Caco-2 (cell line): ENCODE measurements at regions of chr7 and their contacts with region 1.

Region 1: DNA sequence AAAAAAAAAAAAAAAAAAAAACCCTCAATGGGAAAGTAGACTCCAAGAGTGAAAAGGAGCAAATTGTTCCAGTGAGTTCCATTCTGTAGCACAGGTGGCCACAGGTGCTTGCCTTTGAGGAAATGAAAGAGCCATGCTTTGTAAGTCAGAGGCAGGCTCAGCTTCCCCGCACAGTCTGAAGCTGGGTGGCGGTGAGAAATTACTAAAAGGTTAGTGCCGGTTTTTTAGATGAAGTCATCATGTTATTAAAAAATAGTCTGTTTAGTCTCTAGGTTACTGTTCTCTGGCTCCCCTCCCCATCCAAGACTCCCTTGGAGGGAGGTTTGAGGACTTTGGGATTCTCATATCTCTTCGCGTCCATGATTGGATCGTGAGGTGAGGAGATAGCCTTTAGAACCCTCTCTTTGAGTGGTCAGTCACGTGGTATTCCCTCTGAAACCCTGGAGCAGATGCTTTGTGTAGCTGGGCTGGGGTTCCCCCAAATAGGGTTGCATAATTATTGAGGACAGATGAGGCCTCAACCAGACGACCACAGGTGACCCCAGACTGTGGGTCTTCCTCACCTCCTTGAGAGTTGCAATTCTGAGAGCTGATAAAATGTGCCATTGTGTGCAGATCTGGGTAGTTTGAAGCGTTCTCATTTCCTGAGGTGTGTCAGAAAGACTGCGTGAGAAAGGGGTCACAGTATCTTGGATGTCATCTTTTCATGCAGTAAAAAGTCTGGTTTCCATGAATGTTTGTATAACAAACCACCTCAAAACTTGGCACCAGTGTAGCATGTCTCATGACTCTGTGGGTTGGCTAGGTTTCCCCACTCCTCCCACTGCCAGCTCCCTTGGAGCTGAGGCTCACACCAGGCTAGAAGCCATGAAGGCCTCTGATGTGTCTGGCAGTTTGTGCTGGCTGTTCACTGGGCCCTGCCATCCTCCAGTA is 27.1 kb downstream of the OGDH start:
- DNase-seq: no peak
- H3K4me3 ChIP-seq: no peak overlapping the region
- H3K4me3 Mint-ChIP-seq: no peak overlapping the region
- H3K27ac Mint-ChIP-seq: peak overlapping the region; percentile 91
- H3K4me1 ChIP-seq: peaks cover 52% of the 10 kb centered on the region
- H3K4me1 Mint-ChIP-seq: peaks cover 59% of the 10 kb centered on the region
- H3K27me3 ChIP-seq: no peaks in the 10 kb centered on the region
- H3K27me3 Mint-ChIP-seq: no peaks in the 10 kb centered on the region
- CTCF ChIP-seq: no peak

Region 2: DNA sequence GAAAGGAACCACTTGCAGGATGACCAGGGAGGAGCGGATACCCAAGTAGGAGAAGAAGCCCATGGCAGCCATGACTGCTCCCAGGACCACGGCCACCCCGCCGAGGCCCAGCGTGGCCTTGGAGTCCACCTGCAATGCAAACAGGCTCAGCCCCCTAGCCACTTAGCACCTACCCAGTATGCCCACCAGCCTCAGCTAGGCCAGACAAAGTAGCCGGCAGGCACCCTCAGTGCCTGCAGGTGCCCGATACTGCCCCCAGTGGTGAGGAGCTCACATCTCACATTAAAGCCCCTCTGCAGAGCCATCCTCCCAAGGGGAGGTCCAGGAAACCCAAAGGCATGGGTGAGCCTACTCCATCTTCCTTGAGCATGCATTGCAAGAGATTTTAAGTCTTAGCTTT is 99.0 kb before region 1 on chr7:
- CTCF ChIA-PET with region 1: no interaction called
- POLR2A ChIA-PET with region 1: no interaction called
- intact Hi-C with region 1: no loop called
- DNase-seq: peak; percentile 61 to 67
- H3K4me3 ChIP-seq: no peak overlapping the region
- H3K4me3 Mint-ChIP-seq: no peak overlapping the region
- H3K27ac Mint-ChIP-seq: no peak overlapping the region
- H3K4me1 ChIP-seq: no peaks in the 10 kb centered on the region
- H3K4me1 Mint-ChIP-seq: peaks cover 6% of the 10 kb centered on the region
- H3K27me3 ChIP-seq: no peaks in the 10 kb centered on the region
- H3K27me3 Mint-ChIP-seq: no peaks in the 10 kb centered on the region
- CTCF ChIP-seq: peak; percentile 50 to 63

Region 3: DNA sequence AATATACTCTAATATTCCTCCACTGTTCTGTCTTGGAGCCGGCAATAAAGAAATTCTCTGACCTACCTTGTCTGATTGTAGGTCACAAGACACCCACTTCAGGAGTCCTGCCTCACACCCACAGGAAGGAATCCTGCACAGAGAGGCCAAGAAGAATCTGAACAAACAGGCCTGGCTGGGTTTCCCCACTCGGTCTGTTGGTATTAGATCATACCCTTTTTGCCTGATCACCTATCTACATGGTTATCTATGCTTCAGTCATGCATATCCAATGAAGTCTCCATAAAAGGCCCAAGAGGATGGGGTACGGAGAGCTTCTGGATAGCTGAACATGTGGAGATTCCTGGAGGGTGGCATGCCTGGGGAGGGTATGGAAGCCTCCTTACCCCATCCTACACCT is 14.8 kb before region 1 on chr7:
- CTCF ChIA-PET with region 1: interaction called, 5 read pairs
- POLR2A ChIA-PET with region 1: interaction called, 6 read pairs
- intact Hi-C with region 1: loop called (anchors 1 kb)
- DNase-seq: peak; percentile 88 to 89
- H3K4me3 ChIP-seq: no peak overlapping the region
- H3K4me3 Mint-ChIP-seq: peak overlapping the region; percentile 67
- H3K27ac Mint-ChIP-seq: peak overlapping the region; percentile 92
- H3K4me1 ChIP-seq: peaks cover 68% of the 10 kb centered on the region
- H3K4me1 Mint-ChIP-seq: peaks cover 53% of the 10 kb centered on the region
- H3K27me3 ChIP-seq: no peaks in the 10 kb centered on the region
- H3K27me3 Mint-ChIP-seq: no peaks in the 10 kb centered on the region
- CTCF ChIP-seq: no peak

Region 4: DNA sequence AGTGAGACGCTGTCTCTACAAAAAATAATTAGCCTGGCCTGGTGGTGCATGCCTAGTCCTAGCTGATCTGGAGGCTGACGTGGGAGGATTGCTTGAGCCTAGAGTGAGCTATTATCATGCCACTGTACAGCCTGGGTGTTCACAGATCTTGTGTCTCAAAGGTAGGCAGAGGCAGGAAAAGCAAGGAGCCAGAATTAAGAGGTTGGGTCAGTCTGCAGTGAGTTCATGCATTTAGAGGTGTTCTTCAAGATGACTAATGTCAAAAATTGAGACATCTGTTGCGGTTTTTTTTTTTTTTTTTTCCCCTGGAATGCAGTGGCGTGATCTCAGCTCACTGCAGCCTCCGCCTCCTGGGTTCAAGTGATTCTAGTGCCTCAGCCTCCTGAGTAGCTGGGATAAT is 168.4 kb after region 1 on chr7:
- CTCF ChIA-PET with region 1: no interaction called
- POLR2A ChIA-PET with region 1: no interaction called
- intact Hi-C with region 1: no loop called
- DNase-seq: no peak
- H3K4me3 ChIP-seq: no peak overlapping the region
- H3K4me3 Mint-ChIP-seq: no peak overlapping the region
- H3K27ac Mint-ChIP-seq: no peak overlapping the region
- H3K4me1 ChIP-seq: 0 out of 2 replicates have a peak, but pooled peaks cover 3% of the 10 kb centered on the region
- H3K4me1 Mint-ChIP-seq: no peaks in the 10 kb centered on the region
- H3K27me3 ChIP-seq: no peaks in the 10 kb centered on the region
- H3K27me3 Mint-ChIP-seq: no peaks in the 10 kb centered on the region
- CTCF ChIP-seq: no peak